ENCODE measurements at regions of chr5 and their contacts with region 1.

Region 1: GRCh38 chr5:149108651-149109280 is 32.5 kb upstream of the ABLIM3 start:
- DNase-seq: no peak

Region 2: DNA sequence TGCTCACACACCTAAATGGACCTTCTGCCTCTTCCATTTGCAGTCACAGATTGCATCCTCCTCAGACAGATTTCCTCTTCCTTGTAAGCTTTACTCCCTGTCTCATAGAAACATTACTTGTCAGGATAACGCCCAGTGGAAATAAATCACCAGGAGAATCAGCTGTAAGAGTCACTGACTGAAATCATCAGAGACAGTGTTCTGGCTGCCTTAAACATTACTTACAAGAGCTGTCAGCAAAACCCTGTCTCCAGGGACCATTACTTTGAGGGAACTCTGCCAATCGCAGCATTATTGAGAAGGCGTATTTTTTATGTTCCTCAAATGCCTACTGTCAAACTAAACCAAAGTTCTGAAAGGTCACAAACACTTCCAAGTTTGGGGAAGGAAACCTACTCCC is 1604.8 kb before region 1 on chr5:
- intact Hi-C with region 1: no loop called
- DNase-seq: no peak

Region 3: GRCh38 chr5:148939676-148940075 is 169.1 kb before region 1 on chr5:
- intact Hi-C with region 1: loop called in 1 of 2 experiments (anchors 10 kb)
- DNase-seq: no peak